GM10248 (cell line): ENCODE measurements at regions of chr1 and their contacts with region 1.

Region 1: DNA sequence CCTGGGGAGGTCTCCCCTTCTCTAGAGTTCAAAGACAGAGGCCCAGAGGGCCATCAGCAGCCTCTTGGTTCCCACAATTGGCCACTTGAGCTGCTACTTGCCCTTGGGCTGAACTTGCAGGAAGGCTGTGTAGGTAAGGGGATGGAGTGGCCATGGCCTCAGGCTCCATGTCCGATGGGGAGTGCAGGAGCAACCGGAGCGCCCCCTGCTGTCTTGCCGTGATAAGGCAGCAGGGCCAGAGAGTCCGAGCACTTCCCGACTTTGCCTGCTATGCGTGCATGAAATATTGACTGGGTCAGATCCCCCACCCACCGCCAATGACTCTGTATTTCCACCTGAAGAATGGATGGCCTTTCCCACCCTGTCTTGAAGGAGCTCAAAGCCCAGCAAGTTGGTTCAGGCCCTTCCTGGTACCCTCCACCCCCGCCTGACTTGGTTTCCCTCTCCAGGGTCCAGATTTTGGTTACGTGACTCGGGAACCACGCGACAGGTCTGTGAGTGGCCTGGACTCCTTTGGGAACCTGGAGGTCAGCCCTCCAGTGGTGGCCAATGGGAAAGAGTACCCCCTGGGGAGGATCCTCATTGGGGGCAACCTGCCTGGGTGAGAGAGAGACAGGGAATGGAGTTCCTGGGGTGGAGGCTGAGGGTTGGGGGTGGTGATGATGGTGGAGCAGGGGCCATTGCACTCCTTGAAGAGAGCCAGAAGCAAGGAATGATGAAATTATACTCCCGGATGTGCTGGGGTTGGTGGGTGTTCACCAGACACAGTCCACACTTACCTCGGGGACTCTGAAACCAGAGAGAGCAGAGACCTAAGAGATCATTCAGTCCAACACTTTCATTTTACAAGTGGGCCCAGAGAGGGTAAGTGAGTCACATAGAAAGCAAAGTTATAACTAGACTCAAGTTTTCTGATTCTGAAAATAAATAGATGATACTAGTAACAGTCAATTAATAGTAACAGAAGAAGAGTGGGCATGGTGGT is 25.6 kb downstream of the PADI3 start:
- DNase-seq: peak; percentile 77
- CTCF ChIP-seq: peak; percentile 67

Region 2: DNA sequence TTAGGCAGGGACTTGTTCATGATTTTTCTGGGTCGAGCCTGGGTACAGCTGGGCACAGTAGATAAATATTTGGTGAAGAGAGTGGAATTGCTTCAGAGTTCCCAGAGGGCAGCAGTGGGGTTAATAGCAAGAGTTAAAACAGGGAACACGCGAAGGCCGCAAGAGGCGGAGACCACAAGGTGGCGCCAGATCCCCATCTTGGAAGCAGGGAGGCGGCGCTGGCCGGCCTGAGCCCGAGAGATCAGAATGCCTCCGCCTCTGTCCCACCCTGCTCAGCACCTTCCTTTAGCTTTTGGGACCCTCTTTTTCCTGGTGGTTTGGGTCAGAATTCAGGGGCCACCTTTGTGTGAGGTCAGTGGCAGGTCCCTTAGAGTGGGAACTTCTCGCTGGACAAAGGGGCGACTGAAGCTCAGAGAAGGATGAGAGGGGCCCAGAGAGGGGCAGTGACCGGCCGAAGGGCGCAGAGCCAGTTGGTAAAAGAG is 148.7 kb before region 1 on chr1:
- CTCF ChIA-PET with region 1: interaction called, 12 read pairs
- POLR2A ChIA-PET with region 1: no interaction called
- DNase-seq: peak; percentile 88
- CTCF ChIP-seq: peak; percentile 97

Region 3: GRCh38 chr1:17485280-17485679 is 210.8 kb after region 1 on chr1:
- CTCF ChIA-PET with region 1: no interaction called
- POLR2A ChIA-PET with region 1: no interaction called
- DNase-seq: no peak
- CTCF ChIP-seq: peak; percentile 7